ENCODE measurements at regions of chr6 and their contacts with region 1.

Region 1: DNA sequence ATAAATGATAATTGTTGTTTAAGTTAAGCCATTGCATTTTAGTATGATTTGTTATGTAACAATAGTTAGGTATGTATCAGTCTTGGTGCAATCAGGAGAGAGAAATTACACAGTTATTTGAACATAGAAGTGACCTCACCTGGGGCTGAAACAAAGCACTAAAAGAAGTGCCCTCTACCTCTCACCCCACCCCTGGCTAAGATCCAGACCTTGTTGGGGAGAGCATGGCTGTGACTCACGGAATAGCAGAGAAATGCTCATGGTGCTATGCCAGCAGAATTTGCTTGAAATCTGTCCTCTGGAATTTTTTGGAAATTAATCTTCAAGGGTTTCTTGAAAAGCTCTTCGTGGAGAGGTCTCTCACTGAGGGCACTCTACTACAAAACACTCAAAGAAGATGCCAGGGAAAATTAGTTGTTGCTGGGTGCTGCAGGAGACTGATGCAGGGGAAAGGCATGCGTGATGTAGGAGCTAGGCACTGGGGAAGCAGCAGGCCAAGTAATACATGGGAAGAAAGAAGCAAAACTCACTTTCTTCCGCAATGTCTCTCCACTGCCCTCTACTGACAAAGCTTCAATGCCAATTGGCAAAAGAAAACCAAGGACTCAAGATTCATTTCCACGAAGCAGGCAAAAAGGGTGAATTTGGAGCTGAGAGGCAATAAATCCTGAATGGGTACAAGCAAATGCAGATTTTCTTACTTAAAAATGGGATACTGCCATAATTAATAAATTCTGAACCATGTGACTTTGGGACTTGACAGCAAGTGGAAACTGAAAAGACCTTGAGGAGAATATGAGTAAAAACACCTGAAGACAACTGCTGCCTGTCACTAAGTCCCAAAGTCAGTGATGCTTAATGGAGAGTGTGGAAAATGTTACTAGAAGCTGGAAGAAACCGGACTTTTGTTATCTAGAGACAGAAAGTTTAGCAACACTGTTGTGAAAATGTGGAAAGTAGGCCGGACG is 136.3 kb upstream of the ZNF184 start:
- DNase-seq: peak; percentile 50
- CTCF ChIP-seq: peak; percentile 80

Region 2: GRCh38 chr6:27312146-27312949 is 296.9 kb before region 1 on chr6 and contains the start of gene POM121L2:
- CTCF ChIA-PET with region 1: interaction called, 11 read pairs
- POLR2A ChIA-PET with region 1: no interaction called
- DNase-seq: peak; percentile 76
- CTCF ChIP-seq: peak; percentile 79

Region 3: DNA sequence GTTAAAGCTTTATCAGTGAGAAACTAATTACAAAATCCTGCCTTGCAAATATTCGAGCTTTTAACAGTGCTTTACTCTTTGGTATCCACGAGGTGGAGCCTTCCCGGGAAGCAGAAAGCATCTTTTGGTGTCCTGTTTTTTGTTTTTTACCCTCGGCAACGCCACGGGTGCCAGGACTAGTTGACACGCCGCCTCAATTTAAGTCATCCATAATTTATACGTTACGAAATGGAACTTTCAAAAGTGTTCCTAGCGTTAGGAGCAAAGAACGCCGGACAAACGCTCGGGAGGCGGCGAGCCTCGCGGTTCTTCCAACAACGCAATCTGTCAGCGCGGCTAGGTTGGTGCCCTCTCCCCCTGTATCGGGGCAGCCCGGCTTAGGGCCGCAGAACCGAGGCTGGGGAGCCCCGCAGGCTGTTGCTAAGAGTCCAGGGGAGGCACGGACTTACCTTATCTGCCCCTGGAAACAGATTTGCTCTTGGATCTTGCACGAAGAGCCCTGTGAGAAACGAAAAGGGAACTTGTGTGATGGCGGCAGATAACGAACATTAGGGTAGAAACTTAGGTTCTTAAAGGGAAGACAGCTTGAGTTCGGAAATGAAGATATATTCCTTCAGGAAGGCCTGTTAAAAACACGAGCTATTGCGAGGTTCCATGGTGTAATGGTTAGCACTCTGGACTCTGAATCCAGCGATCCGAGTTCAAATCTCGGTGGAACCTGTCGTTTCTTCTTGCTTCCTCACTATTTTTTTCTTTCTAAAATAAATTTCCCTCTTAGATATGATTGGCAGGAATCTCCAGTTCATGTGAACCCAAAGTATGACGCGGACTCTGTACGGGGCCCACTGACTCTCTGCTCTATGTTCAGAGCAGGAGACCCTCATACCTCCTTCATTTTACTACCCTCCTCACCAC is 90.1 kb before region 1 on chr6:
- CTCF ChIA-PET with region 1: interaction called, 19 read pairs
- POLR2A ChIA-PET with region 1: no interaction called
- DNase-seq: peak; percentile 70
- CTCF ChIP-seq: peak; percentile 67

Region 4: GRCh38 chr6:27592481-27593199 is 16.6 kb before region 1 on chr6:
- CTCF ChIA-PET with region 1: interaction called, 27 read pairs
- POLR2A ChIA-PET with region 1: no interaction called
- DNase-seq: peak; percentile 76
- CTCF ChIP-seq: no peak

Region 5: GRCh38 chr6:27623103-27623502 is 13.9 kb after region 1 on chr6:
- CTCF ChIA-PET with region 1: interaction called, 19 read pairs
- POLR2A ChIA-PET with region 1: no interaction called
- DNase-seq: no peak
- CTCF ChIP-seq: no peak

Region 6: GRCh38 chr6:27672113-27672799 is 63.1 kb after region 1 on chr6:
- CTCF ChIA-PET with region 1: interaction called, 20 read pairs
- POLR2A ChIA-PET with region 1: no interaction called
- DNase-seq: peak; percentile 70
- CTCF ChIP-seq: no peak